CD14-positive monocyte (primary cell): ENCODE measurements at regions of chr19 and their contacts with region 1.

Region 1: DNA sequence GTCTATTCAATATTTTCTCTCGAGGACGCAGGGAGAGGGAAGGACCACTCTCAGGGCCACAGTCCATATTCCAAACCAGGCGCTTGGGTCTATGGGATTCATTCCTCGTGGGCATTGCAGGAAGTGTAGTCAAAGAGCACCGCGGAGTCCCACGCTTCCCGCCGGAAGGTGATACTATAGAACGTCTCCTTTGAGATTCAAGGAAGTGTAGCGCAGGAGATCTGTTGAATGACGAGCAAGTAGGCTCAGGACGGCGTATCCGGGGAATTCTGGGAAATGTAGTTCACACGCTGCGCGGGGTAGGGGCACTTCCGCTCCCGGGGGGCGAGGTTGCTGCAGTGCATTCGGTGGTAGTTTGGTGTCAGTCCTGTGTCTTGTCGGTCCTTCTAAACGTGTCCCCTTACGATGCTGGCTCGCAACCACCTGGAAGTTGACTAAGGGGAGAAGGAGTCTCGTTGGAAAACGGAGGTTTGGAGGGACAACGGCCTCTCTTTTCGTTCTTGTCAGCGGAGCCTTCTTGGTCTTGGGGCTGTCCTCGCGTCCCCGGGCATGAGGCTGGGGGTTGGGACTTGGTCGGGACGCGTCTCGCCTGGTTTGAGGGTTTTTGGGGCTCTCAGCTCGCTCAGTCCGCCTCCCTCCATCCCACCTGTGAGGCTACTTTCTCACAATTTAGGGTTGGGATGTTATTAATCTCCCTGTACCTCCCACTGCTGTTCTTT is at the start of gene ZNF284:
- DNase-seq: peak; percentile 75 to 86 (median 77)
- H3K4me3 ChIP-seq: peak within 1 kb of the TSS; percentile 77 to 82 (median 80)
- H3K4me3 Mint-ChIP-seq: peak within 1 kb of the TSS; percentile 96 to 98
- H3K27ac ChIP-seq: peak within 1 kb of the TSS; percentile 1 to 64
- H3K27ac Mint-ChIP-seq: peak within 1 kb of the TSS in 6 of 7 donors; percentile 9 to 83 (median 57)
- H3K4me1 ChIP-seq: peaks cover 16 to 17% of the 10 kb centered on the region in 2 donors
- H3K4me1 Mint-ChIP-seq: peaks cover 22% of the 10 kb centered on the region
- H3K27me3 ChIP-seq: no peaks in the 10 kb centered on the region
- H3K27me3 Mint-ChIP-seq: peaks cover 3 to 4% (median 3%) of the 10 kb centered on the region in 3 donors
- CTCF ChIP-seq: no peak
- polyA plus RNA-seq, gene ZNF284: 0.04 to 1.3 (median 0.13) TPM

Region 2: GRCh38 chr19:43826787-43827754 is 244.9 kb before region 1 on chr19 and contains the start of gene ZNF283:
- intact Hi-C with region 1: loop called in 1 of 2 experiments (anchors 10 kb)
- DNase-seq: peak; percentile 55 to 69 (median 69)
- H3K4me3 ChIP-seq: peak within 1 kb of the TSS; percentile 61 to 84 (median 69)
- H3K4me3 Mint-ChIP-seq: peak within 1 kb of the TSS; percentile 90 to 93
- H3K27ac ChIP-seq: peak within 1 kb of the TSS; percentile 22 to 72
- H3K27ac Mint-ChIP-seq: peak within 1 kb of the TSS; percentile 17 to 91 (median 60)
- H3K4me1 ChIP-seq: peaks cover 11 to 15% of the 10 kb centered on the region in 2 donors
- H3K4me1 Mint-ChIP-seq: peaks cover 15% of the 10 kb centered on the region
- H3K27me3 ChIP-seq: peaks cover under 1 to 4% of the 10 kb centered on the region in 2 donors
- H3K27me3 Mint-ChIP-seq: peaks cover 11 to 27% (median 13%) of the 10 kb centered on the region in 3 donors
- CTCF ChIP-seq: no peak
- polyA plus RNA-seq, gene ZNF283: 0.80 to 2.5 (median 2.0) TPM

Region 3: GRCh38 chr19:43983912-43984686 is 87.9 kb before region 1 on chr19 and contains the start of gene ZNF155:
- intact Hi-C with region 1: no loop called
- DNase-seq: peak; percentile 74 to 84 (median 83)
- H3K4me3 ChIP-seq: peak within 1 kb of the TSS; percentile 85 to 93 (median 88)
- H3K4me3 Mint-ChIP-seq: peak within 1 kb of the TSS; percentile 97 to 98
- H3K27ac ChIP-seq: peak within 1 kb of the TSS; percentile 3 to 85
- H3K27ac Mint-ChIP-seq: peak within 1 kb of the TSS; percentile 78 to 96 (median 90)
- H3K4me1 ChIP-seq: peaks cover 7 to 14% of the 10 kb centered on the region in 2 donors
- H3K4me1 Mint-ChIP-seq: peaks cover 11% of the 10 kb centered on the region
- H3K27me3 ChIP-seq: no peaks in the 10 kb centered on the region
- H3K27me3 Mint-ChIP-seq: no peaks in the 10 kb centered on the region
- CTCF ChIP-seq: no peak
- polyA plus RNA-seq, gene ZNF155: 1.2 to 3.0 (median 1.4) TPM

Region 4: DNA sequence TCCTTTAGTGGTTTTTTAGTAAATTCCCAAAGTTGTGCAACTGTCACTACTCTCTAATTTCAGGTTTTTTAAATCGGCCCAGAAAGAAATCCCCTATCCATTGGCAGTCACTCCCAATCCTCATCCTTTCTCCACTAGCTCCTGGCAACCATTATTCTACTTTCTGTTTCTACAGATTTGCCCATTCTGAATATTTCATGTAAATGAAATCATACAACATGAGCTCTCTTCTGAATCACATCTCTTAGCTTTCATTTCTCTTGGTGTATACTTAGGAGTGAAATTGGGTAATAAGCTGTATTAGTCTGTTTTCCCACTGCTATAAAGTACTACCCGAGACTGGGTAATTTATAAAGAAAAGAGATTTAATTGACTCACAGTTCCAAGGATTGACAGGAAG is 29.8 kb before region 1 on chr19:
- intact Hi-C with region 1: no loop called
- DNase-seq: no peak
- H3K4me3 ChIP-seq: no peak overlapping the region
- H3K4me3 Mint-ChIP-seq: no peak overlapping the region
- H3K27ac ChIP-seq: no peak overlapping the region
- H3K27ac Mint-ChIP-seq: no peak overlapping the region
- H3K4me1 ChIP-seq: no peaks in the 10 kb centered on the region
- H3K4me1 Mint-ChIP-seq: no peaks in the 10 kb centered on the region
- H3K27me3 ChIP-seq: no peaks in the 10 kb centered on the region
- H3K27me3 Mint-ChIP-seq: peaks cover 0 to 6% (median 3%) of the 10 kb centered on the region in 3 donors
- CTCF ChIP-seq: no peak

Region 5: DNA sequence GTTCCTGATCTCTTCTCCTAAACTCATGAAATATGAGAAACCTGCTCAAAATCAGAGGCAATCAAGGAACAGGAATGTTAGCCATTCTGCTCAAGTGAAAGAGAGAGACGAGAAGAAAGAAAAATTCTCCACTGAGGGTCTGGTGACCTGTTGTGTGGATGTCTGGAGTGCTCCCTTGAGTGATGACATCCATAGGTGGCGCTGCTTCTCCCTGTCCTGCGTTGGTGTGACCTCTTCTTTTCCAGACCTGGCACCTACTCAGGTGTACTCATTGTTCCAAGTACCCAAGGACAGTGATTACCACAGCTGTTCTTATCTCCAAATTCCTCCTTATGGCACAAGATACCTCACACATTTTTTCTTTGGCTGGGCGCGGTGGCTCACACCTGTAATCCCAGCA is 16.1 kb before region 1 on chr19:
- intact Hi-C with region 1: no loop called
- DNase-seq: no peak
- H3K4me3 ChIP-seq: no peak overlapping the region
- H3K4me3 Mint-ChIP-seq: no peak overlapping the region
- H3K27ac ChIP-seq: no peak overlapping the region
- H3K27ac Mint-ChIP-seq: no peak overlapping the region
- H3K4me1 ChIP-seq: peaks cover 13 to 15% of the 10 kb centered on the region in 2 donors
- H3K4me1 Mint-ChIP-seq: peaks cover 20% of the 10 kb centered on the region
- H3K27me3 ChIP-seq: no peaks in the 10 kb centered on the region
- H3K27me3 Mint-ChIP-seq: peaks cover 0 to 5% (median 0%) of the 10 kb centered on the region in 3 donors
- CTCF ChIP-seq: no peak